WTC11 (cell line): ENCODE measurements at regions of chr3 and their contacts with region 1.

Region 1: DNA sequence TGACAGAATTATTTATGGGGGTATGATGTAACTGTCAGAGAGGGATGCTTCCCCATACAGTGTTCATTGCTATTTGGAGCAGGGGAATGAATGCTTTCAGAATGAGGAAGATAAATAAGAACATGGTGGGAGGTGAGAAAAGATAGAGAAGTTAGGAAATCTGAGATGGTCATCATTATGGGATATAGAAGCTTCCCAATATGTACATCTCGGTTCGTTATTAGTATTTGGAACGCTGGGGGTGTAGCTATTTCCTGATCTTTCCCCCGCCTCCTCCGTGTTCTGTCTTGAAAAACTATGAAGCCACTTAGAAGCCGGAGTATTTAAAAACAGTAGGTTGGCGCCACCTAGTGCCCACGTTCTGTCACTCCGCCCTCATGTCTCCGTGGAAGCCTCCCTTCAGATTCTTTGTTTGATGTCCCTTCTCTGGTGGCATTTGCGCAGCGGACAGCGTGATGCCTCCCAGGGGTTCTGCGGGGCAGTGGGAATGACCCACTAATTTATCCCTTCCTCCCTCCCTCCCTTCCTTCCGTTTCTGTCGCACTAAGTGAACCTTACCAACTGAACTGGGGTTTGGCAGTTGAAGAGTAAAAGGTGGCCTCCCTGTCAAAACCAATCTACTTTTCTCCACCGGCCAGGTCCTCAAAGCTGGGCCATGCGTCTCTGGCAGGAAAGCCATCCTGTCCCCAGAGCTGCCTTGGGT is 184.5 kb downstream of the FEZF2 start:
- DNase-seq: peak; percentile 75
- ATAC-seq: peak; percentile 58
- H3K4me3 Mint-ChIP-seq: no peak overlapping the region
- H3K27ac Mint-ChIP-seq: no peak overlapping the region
- H3K4me1 Mint-ChIP-seq: peaks cover 27% of the 10 kb centered on the region
- H3K27me3 Mint-ChIP-seq: no peaks in the 10 kb centered on the region; the same call in 1 of the 2 replicates
- CTCF ChIP-seq: peak; percentile 74

Region 2: GRCh38 chr3:61853912-61854311 is 334.9 kb before region 1 on chr3:
- CTCF ChIA-PET with region 1: no interaction called
- POLR2A ChIA-PET with region 1: no interaction called
- DNase-seq: no peak
- ATAC-seq: no peak; the same call in 1 of the 2 replicates
- H3K4me3 Mint-ChIP-seq: no peak overlapping the region
- H3K27ac Mint-ChIP-seq: no peak overlapping the region
- H3K4me1 Mint-ChIP-seq: peaks cover 73% of the 10 kb centered on the region
- H3K27me3 Mint-ChIP-seq: no peaks in the 10 kb centered on the region
- CTCF ChIP-seq: no peak

Region 3: DNA sequence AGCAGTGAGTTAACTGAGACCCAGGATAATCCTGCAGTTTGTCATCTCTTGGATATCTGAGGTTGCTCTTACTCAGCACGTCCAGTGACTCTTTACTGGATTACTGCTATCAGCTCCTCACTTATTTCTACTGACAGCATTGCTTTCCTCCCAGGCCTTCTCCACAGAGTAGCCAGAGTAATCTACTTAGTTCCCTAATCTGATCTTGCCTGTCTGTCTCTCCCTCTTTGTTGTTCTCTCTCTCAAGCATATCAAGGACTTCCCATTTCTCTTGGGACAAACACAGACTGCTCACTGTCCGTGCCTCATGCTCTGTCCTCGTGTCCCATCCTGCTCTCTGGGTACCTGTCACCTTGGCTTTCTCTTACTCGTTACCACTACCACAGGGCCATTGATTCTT is 191.7 kb before region 1 on chr3:
- CTCF ChIA-PET with region 1: no interaction called
- POLR2A ChIA-PET with region 1: no interaction called
- DNase-seq: no peak
- ATAC-seq: no peak
- H3K4me3 Mint-ChIP-seq: no peak overlapping the region
- H3K27ac Mint-ChIP-seq: peak overlapping the region; percentile 66; the same call in 1 of the 2 replicates
- H3K4me1 Mint-ChIP-seq: peaks cover 28% of the 10 kb centered on the region
- H3K27me3 Mint-ChIP-seq: no peaks in the 10 kb centered on the region
- CTCF ChIP-seq: no peak

Region 4: GRCh38 chr3:62169906-62170660 is 18.7 kb before region 1 on chr3:
- CTCF ChIA-PET with region 1: interaction called, 11 read pairs
- POLR2A ChIA-PET with region 1: no interaction called
- DNase-seq: no peak
- ATAC-seq: peak; percentile 54
- H3K4me3 Mint-ChIP-seq: no peak overlapping the region
- H3K27ac Mint-ChIP-seq: peak overlapping the region; percentile 11; the same call in 1 of the 2 replicates
- H3K4me1 Mint-ChIP-seq: peaks cover 35% of the 10 kb centered on the region
- H3K27me3 Mint-ChIP-seq: no peaks in the 10 kb centered on the region
- CTCF ChIP-seq: no peak

Region 5: GRCh38 chr3:62201438-62202035 is 12.7 kb after region 1 on chr3:
- CTCF ChIA-PET with region 1: interaction called, 18 read pairs
- POLR2A ChIA-PET with region 1: no interaction called
- DNase-seq: no peak
- ATAC-seq: peak; percentile 69
- H3K4me3 Mint-ChIP-seq: no peak overlapping the region
- H3K27ac Mint-ChIP-seq: no peak overlapping the region
- H3K4me1 Mint-ChIP-seq: no peaks in the 10 kb centered on the region
- H3K27me3 Mint-ChIP-seq: no peaks in the 10 kb centered on the region
- CTCF ChIP-seq: peak; percentile 20; the same call in 1 of the 2 replicates

Region 6: DNA sequence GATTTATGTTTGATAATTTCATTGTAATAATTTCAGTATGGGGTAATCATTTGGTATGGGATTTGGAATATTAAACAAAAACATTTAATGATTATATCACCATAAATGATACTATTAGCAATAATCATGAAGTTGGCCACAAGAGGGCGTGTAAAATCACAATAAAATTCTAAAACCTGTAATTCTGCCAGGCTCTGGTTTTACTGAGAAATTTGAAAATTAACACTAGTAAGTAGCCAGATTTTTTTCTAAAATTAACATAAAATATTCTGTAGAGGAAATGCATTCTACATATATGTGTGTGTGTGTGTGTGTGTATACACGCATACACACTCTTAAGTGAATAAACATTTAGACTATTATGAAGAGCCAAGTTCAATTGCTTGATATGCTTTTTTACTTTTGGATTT is 144.0 kb after region 1 on chr3:
- CTCF ChIA-PET with region 1: no interaction called
- POLR2A ChIA-PET with region 1: no interaction called
- DNase-seq: no peak
- ATAC-seq: no peak
- H3K4me3 Mint-ChIP-seq: no peak overlapping the region
- H3K27ac Mint-ChIP-seq: no peak overlapping the region
- H3K4me1 Mint-ChIP-seq: peaks cover 29% of the 10 kb centered on the region
- H3K27me3 Mint-ChIP-seq: no peaks in the 10 kb centered on the region
- CTCF ChIP-seq: no peak; the same call in none of the 2 replicates